AG04449 (cell line): ENCODE measurements at regions of chr10 and their contacts with region 1.

Region 1: DNA sequence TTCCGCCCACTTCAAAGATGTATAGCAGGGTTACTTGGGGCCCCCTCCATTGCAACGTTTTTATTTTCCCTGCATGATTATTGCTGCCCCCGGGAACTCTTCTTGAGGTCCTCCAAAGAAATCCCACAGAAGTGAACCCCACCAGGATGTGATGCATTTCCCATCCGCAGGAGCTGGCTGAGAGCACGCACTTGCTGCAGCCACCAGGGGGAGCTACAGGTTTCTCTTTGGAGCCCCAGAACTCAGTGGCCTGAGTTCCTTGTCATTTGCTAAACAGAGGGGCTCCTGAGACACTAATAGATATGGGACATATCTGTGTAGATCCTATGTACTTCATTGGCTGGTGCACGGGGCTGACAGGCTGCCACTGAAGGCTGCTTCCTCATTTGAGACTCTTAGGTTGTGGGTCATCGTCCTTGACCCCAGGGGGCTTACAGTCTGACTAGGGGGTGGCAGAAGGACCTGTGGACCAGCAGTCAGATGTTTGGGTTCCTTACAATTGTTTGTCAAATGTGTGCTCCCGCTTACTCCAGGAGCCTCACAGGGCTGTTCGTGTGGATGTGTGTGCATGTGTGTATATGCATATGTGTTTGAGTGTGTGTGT is 52.3 kb upstream of the ENO4 start:
- DNase-seq: no peak
- H3K4me3 ChIP-seq: no peak overlapping the region
- CTCF ChIP-seq: peak; percentile 87

Region 2: GRCh38 chr10:116756277-116756676 is 40.7 kb before region 1 on chr10:
- CTCF ChIA-PET with region 1: no interaction called
- POLR2A ChIA-PET with region 1: no interaction called
- DNase-seq: no peak
- H3K4me3 ChIP-seq: no peak overlapping the region
- CTCF ChIP-seq: no peak

Region 3: DNA sequence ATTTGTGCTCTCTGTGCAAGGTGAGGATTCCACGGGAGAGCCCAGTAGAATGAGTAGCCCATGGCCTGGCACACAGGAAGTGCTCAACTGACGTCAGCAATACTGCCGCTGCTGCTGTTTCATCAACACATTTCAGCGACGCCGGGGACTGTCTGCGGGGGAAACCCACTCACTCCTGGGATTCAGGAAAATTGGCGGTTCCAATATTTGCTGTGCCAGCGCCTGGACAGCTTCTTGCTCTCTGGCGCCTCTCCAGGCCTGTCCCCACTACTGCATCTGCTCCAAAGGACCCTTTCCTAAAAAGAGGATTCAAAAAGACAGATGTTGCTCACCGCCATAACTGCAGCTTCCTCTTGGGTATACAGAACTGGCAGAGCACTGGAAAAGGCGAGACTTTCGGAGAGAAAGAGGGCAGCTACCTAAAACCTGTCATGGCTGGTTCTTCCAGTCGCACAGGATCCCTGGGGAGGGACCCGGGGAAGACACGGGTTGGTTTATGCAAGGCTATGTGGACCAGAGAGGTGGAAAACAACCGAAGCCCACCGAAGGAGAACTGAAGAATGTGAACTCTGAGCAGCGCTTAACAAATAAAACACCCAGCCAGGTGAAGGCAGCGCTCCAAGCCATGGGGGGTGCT is 12.6 kb after region 1 on chr10:
- CTCF ChIA-PET with region 1: interaction called, 41 read pairs
- POLR2A ChIA-PET with region 1: no interaction called
- DNase-seq: no peak
- H3K4me3 ChIP-seq: no peak overlapping the region
- CTCF ChIP-seq: no peak

Region 4: DNA sequence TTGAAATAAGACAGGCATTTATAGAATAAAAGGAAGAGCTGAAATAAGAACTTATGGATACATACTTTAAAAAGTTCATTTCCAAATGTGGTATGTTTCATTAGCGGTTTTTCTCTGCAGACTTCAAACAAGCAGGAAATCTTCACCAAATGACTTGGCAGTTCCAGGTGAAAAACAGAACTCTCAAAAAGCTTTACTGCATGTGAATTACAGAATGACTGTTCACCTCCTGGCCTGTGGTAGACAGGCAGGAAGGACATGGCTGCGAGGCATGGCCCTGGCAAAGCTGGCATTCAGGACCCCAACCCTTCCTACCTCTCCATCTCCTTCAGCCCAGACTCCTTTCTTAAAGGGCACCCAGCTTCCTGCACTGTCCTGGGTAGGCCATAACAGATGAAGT is 31.1 kb after region 1 on chr10:
- CTCF ChIA-PET with region 1: interaction called, 12 read pairs
- POLR2A ChIA-PET with region 1: no interaction called
- DNase-seq: no peak
- H3K4me3 ChIP-seq: no peak overlapping the region
- CTCF ChIP-seq: no peak

Region 5: DNA sequence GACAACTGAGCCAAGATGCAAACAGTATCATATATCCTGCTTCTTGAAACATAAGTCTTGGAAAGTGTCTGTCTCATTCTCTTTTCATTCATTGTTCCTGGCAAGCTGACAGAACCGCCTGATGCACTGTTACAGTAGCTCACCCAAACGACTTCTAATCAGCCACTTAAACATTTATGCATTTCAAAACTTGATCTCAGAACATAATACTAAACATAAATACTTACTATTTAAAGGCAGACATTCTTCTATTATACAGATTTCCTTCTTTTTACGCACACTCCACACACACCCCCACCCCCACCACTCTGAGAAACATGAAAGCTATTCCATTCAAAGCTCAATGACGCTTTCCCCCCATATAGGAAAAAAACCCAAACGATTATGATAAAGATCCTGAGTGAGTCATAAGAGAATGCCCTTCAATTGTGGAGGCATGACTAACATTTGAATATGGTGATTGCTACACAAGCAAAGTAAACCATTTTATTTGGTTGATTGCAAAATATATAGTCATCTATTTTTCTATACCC is 177.5 kb after region 1 on chr10:
- CTCF ChIA-PET with region 1: no interaction called
- POLR2A ChIA-PET with region 1: no interaction called
- DNase-seq: peak; percentile 69
- H3K4me3 ChIP-seq: no peak overlapping the region
- CTCF ChIP-seq: no peak